Activated T-helper 2 cell treated with anti-CD3 and anti-CD28 coated beads, Interferon-gamma antibody, Interleukin-2, Interleukin-4, amounts not matched to agents 10 μg/mL and 5 μg/mL and 100 μg/mL, durations not matched to agents 14 hours and 24 hours and 36 hours (primary cell): ENCODE measurements at regions of chr4 and their contacts with region 1.

Region 1: DNA sequence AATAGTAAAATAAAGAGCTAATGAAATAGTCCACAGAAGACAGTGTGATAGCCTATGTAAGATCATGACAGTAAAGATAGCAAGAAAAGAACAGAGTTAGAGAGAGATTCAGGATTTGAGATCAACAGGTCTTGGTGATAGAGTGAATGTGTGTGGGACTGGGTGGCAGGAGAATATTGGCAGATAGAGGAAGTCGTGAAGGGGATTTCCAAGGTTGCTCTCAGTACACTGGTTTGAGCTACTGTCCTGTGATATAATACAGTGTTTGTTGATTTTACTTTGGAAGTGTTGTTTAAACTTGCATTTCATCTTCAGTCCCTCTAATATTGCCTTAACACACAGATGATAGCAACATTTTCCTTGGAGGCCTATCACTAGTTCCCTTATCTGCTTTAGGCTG is 44.1 kb downstream of the DTHD1 start:
- DNase-seq: no peak
- H3K4me3 Mint-ChIP-seq: no peak overlapping the region
- H3K27ac Mint-ChIP-seq: peak overlapping the region; percentile 63
- H3K4me1 Mint-ChIP-seq: peaks cover 62% of the 10 kb centered on the region
- H3K27me3 Mint-ChIP-seq: no peaks in the 10 kb centered on the region

Region 2: GRCh38 chr4:35970366-35970960 is 355.0 kb before region 1 on chr4:
- intact Hi-C with region 1: loop called (anchors 5 kb)
- DNase-seq: no peak
- H3K4me3 Mint-ChIP-seq: no peak overlapping the region
- H3K27ac Mint-ChIP-seq: no peak overlapping the region
- H3K4me1 Mint-ChIP-seq: peaks cover 7% of the 10 kb centered on the region
- H3K27me3 Mint-ChIP-seq: peaks cover 5% of the 10 kb centered on the region

Region 3: GRCh38 chr4:36099527-36099926 is 226.0 kb before region 1 on chr4:
- intact Hi-C with region 1: loop called (anchors 1 kb)
- DNase-seq: peak; percentile 30
- H3K4me3 Mint-ChIP-seq: no peak overlapping the region
- H3K27ac Mint-ChIP-seq: peak overlapping the region; percentile 71
- H3K4me1 Mint-ChIP-seq: peaks cover 23% of the 10 kb centered on the region
- H3K27me3 Mint-ChIP-seq: no peaks in the 10 kb centered on the region

Region 4: GRCh38 chr4:36244257-36245079 is 81.0 kb before region 1 on chr4 and contains the start of gene ARAP2:
- intact Hi-C with region 1: loop called (anchors 1 kb)
- DNase-seq: peak; percentile 68
- H3K4me3 Mint-ChIP-seq: peak within 1 kb of the TSS; percentile 96
- H3K27ac Mint-ChIP-seq: peak within 1 kb of the TSS; percentile 95
- H3K4me1 Mint-ChIP-seq: peaks cover 41% of the 10 kb centered on the region
- H3K27me3 Mint-ChIP-seq: peaks cover 8% of the 10 kb centered on the region
- total RNA-seq, gene ARAP2: 29.5 and 35.8 TPM in 2 replicates

Region 5: GRCh38 chr4:36278789-36279188 is 46.7 kb before region 1 on chr4:
- intact Hi-C with region 1: loop called (anchors 1 kb)
- DNase-seq: no peak
- H3K4me3 Mint-ChIP-seq: peak overlapping the region; percentile 3
- H3K27ac Mint-ChIP-seq: peak overlapping the region; percentile 78
- H3K4me1 Mint-ChIP-seq: peaks cover 66% of the 10 kb centered on the region
- H3K27me3 Mint-ChIP-seq: no peaks in the 10 kb centered on the region

Region 6: GRCh38 chr4:36351082-36351666 is 25.7 kb after region 1 on chr4:
- intact Hi-C with region 1: loop called (anchors 1 kb)
- DNase-seq: peak; percentile 58
- H3K4me3 Mint-ChIP-seq: no peak overlapping the region
- H3K27ac Mint-ChIP-seq: no peak overlapping the region
- H3K4me1 Mint-ChIP-seq: peaks cover 32% of the 10 kb centered on the region
- H3K27me3 Mint-ChIP-seq: peaks cover 9% of the 10 kb centered on the region

Region 7: GRCh38 chr4:36485885-36486284 is 160.4 kb after region 1 on chr4:
- intact Hi-C with region 1: no loop called
- DNase-seq: no peak
- H3K4me3 Mint-ChIP-seq: no peak overlapping the region
- H3K27ac Mint-ChIP-seq: no peak overlapping the region
- H3K4me1 Mint-ChIP-seq: no peaks in the 10 kb centered on the region
- H3K27me3 Mint-ChIP-seq: peaks cover 2% of the 10 kb centered on the region

Region 8: DNA sequence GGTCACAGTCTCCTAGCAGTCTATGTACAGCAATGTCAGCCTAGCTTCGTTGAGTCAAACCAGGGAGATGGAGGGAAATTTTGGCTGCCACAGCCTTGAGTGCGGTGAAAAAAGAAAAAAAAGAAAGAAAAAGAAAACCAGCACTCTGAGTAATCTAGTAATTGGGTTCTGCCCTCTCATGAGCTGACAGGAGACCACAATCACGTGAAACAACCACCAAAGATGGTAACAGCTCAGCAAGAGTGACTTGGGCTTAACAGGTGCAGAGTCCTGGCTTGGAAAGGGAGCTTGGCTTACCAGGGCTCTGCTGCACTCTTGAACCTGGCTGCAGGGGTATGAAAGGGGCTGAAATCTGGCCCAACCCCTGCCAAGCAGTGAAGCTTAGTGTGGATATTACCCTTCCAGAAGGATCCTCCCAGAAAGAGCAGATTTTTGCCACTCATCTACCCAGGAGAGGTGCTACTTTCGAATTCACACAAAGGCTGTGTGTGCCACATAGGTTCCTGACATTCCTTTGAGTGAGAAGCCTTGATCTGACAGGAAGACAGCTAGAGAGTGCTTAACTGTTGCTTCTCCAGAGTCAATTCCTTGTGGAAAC is 1985.0 kb after region 1 on chr4:
- intact Hi-C with region 1: loop called (anchors 5 kb)
- DNase-seq: peak; percentile 77
- H3K4me3 Mint-ChIP-seq: no peak overlapping the region
- H3K27ac Mint-ChIP-seq: peak overlapping the region; percentile 38
- H3K4me1 Mint-ChIP-seq: peaks cover 58% of the 10 kb centered on the region
- H3K27me3 Mint-ChIP-seq: peaks cover 36% of the 10 kb centered on the region